ENCODE measurements at regions of chr13 and their contacts with region 1.

Region 1: DNA sequence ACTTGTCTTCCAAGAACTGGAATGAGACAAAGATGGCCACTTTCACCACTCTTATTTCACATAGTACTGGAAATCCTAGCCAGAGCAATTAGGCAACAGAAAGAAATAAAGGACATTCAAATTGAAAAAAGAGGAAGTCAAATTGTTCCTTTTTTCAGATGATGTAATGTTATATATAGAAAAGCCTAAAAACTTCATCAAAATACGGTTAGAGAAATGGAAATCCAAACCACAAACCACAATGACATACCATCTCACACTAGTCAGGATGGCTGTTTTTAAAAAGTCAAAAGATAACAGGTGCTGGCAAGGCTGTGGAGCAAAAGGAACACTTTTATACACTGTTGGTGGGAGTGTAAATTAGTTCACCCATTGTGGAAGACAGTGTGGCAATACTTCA is 113.3 kb upstream of the SPRY2 start:
- DNase-seq: no peak
- H3K4me3 ChIP-seq: no peak overlapping the region
- H3K27me3 ChIP-seq: no peaks in the 10 kb centered on the region
- CTCF ChIP-seq: no peak

Region 2: GRCh38 chr13:79671420-79671819 is 782.8 kb before region 1 on chr13:
- CTCF ChIA-PET with region 1: no interaction called
- POLR2A ChIA-PET with region 1: interaction called, 10 read pairs
- DNase-seq: no peak
- H3K4me3 ChIP-seq: no peak overlapping the region
- H3K27me3 ChIP-seq: no peaks in the 10 kb centered on the region; the same call in 1 of the 2 replicates
- CTCF ChIP-seq: no peak

Region 3: DNA sequence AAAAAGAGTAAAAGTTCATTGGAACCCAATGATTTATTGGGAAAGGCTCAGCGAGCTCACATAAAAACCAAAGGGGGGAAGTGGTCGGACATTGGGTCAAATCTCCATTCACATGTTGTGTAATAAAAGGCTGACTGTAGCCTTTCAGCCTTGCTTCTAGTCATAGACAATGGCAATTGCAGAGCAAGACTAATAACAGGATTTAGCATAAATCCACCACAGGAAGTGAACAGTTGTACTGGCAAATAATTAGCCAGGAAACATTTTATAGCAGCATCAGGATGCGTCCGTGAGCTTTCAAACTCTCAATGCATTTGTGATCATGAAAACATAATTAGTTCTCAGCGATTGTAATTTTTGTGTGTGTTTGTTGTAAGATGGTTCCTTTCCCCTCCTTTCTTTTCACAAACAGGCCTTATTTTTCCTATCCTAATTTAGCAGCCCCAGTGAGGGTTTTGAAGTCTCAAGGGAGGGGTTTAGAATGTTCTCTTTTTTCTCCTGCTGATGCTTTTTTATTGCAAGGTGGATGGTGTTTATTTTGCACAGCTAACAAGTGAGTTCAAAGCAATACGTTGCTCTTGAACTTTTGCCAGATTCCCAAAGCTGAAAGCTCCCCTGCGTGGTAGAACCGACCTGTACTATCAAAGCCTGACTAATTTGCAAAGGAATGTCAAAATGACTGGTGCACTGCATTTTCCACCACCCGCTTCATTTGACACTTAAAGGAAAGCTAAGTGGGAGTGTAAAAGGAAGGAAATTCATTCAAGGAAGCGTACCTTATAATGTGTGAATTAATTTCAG is 218.9 kb before region 1 on chr13:
- CTCF ChIA-PET with region 1: no interaction called
- POLR2A ChIA-PET with region 1: no interaction called
- DNase-seq: no peak
- H3K4me3 ChIP-seq: no peak overlapping the region
- H3K27me3 ChIP-seq: no peaks in the 10 kb centered on the region
- CTCF ChIP-seq: no peak

Region 4: GRCh38 chr13:80469853-80470381 is 15.7 kb after region 1 on chr13:
- CTCF ChIA-PET with region 1: no interaction called
- POLR2A ChIA-PET with region 1: interaction called, 10 read pairs
- DNase-seq: no peak
- H3K4me3 ChIP-seq: no peak overlapping the region
- H3K27me3 ChIP-seq: no peaks in the 10 kb centered on the region
- CTCF ChIP-seq: no peak

Region 5: GRCh38 chr13:80486402-80486801 is 32.2 kb after region 1 on chr13:
- CTCF ChIA-PET with region 1: no interaction called
- POLR2A ChIA-PET with region 1: no interaction called
- DNase-seq: no peak
- H3K4me3 ChIP-seq: no peak overlapping the region
- H3K27me3 ChIP-seq: no peaks in the 10 kb centered on the region
- CTCF ChIP-seq: no peak

Measured in BJ (cell line).